PC-3 (cell line): ENCODE measurements at regions of chr2 and their contacts with region 1.

Region 1: GRCh38 chr2:201414099-201415023 is 36.9 kb downstream of the TRAK2 start:
- DNase-seq: no peak
- ATAC-seq: no peak
- H3K4me3 ChIP-seq: no peak overlapping the region
- H3K27ac ChIP-seq: no peak overlapping the region
- H3K4me1 ChIP-seq: peaks cover 10% of the 10 kb centered on the region
- H3K27me3 ChIP-seq: no peaks in the 10 kb centered on the region
- CTCF ChIP-seq: no peak

Region 2: DNA sequence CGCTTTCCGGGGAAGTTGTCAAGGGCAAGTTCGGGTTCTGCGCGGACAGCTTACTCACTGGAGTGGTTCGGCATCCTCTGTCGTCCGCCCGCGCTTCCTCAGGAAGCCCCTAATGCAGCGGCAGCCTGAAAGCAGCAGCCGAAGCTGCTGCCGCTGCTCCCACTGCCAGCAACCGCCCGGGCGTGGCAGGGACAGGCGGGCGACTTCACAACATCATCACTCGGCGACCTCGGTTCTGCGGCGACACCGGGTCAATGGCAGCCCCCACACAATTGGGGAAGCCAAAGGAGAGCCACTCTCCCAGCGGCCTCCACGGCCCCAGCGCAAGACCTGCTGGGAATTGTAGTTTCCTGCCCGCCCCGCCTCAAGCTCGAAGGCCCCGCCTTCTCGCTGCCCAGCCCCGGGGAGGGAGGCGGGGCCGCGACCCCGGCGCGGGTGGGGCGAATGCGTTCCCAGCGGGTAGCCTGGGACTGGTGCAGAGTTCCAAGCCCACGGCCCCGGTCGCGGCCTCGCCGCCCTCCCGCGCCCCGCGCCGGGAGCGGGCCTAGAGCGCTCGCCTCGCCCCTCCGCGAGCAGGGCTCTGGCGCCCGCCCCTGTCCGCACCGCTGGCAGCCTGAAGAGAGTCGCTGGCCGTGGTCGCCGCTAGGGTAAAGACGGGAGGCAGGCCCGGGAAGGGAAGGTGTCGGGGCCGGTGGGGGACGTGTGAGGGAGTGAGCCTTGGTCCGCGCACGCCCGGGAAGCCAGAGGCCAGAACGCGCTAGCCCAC is 37.1 kb after region 1 on chr2 and contains the starts of genes STRADB and TRAK2:
- CTCF ChIA-PET with region 1: no interaction called
- POLR2A ChIA-PET with region 1: no interaction called
- intact Hi-C with region 1: loop called (anchors 5 kb)
- DNase-seq: peak; percentile 95
- ATAC-seq: peak; percentile 88
- H3K4me3 ChIP-seq: peak within 1 kb of the TSS; percentile 88
- H3K27ac ChIP-seq: peak within 1 kb of the TSS; percentile 21
- H3K4me1 ChIP-seq: peaks cover 23% of the 10 kb centered on the region
- H3K27me3 ChIP-seq: no peaks in the 10 kb centered on the region
- CTCF ChIP-seq: 0 out of 2 replicates have a peak, but pooled peaks have one; percentile 16
- total RNA-seq, gene STRADB: 27.8 and 28.9 TPM in 2 replicates
- total RNA-seq, gene TRAK2: 9.4 and 10.1 TPM in 2 replicates

Region 3: GRCh38 chr2:201466050-201466675 is 51.8 kb after region 1 on chr2:
- CTCF ChIA-PET with region 1: no interaction called
- POLR2A ChIA-PET with region 1: no interaction called
- intact Hi-C with region 1: loop called (anchors 5 kb)
- DNase-seq: peak; percentile 80
- ATAC-seq: peak; percentile 85
- H3K4me3 ChIP-seq: peak overlapping the region; percentile 45
- H3K27ac ChIP-seq: peak overlapping the region; percentile 85
- H3K4me1 ChIP-seq: peaks cover 46% of the 10 kb centered on the region
- H3K27me3 ChIP-seq: no peaks in the 10 kb centered on the region
- CTCF ChIP-seq: no peak

Region 4: GRCh38 chr2:201660293-201660895 is 246.0 kb after region 1 on chr2:
- CTCF ChIA-PET with region 1: interaction called, 4 read pairs
- POLR2A ChIA-PET with region 1: no interaction called
- intact Hi-C with region 1: loop called (anchors 1 kb)
- DNase-seq: no peak
- ATAC-seq: no peak
- H3K4me3 ChIP-seq: no peak overlapping the region
- H3K27ac ChIP-seq: no peak overlapping the region
- H3K4me1 ChIP-seq: peaks cover 2% of the 10 kb centered on the region; the same call in 1 of the 2 replicates
- H3K27me3 ChIP-seq: no peaks in the 10 kb centered on the region
- CTCF ChIP-seq: no peak

Region 5: DNA sequence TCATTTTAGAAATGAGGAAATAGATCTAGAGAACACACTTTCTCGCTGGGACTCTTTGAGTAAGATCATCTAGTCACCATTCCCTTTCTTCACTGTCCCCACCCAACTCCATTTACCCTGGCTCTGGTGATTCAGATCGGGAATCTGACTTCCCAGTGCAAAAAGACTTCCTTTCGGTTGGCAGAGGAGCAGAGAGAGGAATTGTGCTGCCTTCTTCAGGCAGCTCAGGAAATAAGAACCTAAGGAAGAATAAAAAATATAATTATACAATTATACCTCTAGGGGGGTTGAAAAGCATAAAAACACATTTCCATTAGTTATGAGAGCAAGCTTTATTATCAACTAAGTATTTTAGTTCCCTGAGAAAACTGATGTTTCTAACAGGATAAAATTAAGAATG is 293.4 kb after region 1 on chr2:
- CTCF ChIA-PET with region 1: no interaction called
- POLR2A ChIA-PET with region 1: no interaction called
- intact Hi-C with region 1: loop called (anchors 1 kb)
- DNase-seq: peak; percentile 67
- ATAC-seq: peak; percentile 88
- H3K4me3 ChIP-seq: no peak overlapping the region
- H3K27ac ChIP-seq: no peak overlapping the region
- H3K4me1 ChIP-seq: peaks cover 11% of the 10 kb centered on the region; the same call in 1 of the 2 replicates
- H3K27me3 ChIP-seq: no peaks in the 10 kb centered on the region
- CTCF ChIP-seq: peak; percentile 67